ENCODE measurements at regions of chr19 and their contacts with region 1.

Region 1: DNA sequence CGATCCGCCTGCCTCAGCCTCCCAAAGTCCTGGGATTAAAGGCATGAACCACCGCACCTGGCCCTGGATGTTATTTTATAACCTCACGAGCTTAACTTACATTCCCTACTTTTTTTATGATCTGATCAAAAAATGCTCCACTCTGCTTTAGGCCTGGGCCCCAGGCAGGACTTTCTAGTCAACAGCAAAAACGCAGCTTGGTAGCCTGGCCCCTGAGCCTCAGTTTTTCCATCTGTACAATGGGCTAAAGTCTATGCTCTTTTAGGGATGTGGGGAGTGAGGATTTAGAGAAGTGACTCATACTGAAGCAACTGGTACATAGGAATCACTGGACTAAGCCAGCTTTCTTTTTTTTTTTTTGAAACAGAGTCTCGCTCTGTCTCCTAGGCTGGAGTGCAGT is 11.9 kb upstream of the PIK3R2 start:
- DNase-seq: no peak
- H3K4me3 ChIP-seq: no peak overlapping the region
- CTCF ChIP-seq: no peak

Region 2: DNA sequence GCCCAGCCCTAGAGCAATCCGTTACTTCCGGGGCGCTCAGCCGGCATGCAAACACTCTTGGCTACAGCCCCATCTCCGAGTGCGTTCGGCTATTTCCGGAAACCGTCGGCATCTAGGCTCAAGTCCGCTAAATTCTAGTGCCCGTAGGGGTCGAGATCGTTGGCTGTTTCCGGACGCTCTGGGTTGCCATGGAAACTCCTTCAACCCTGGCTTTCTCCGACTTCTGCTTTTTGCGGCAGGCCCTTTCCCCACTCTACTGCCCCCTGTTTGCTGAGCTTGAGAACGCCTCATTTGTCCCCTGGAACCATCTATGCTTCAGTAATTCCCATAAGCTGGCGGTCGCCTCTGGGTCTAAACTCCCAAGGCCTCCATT is 11.4 kb after region 1 on chr19:
- CTCF ChIA-PET with region 1: interaction called, 19 read pairs
- POLR2A ChIA-PET with region 1: interaction called, 4 read pairs
- DNase-seq: peak; percentile 74
- H3K4me3 ChIP-seq: peak overlapping the region; percentile 66
- CTCF ChIP-seq: peak; percentile 68

Region 3: GRCh38 chr19:18304458-18305310 is 163.7 kb after region 1 on chr19:
- CTCF ChIA-PET with region 1: no interaction called
- POLR2A ChIA-PET with region 1: no interaction called
- DNase-seq: no peak
- H3K4me3 ChIP-seq: peak overlapping the region; percentile 45
- CTCF ChIP-seq: no peak